Activated CD4-positive, alpha-beta T cell treated with anti-CD3 and anti-CD28 coated beads, Interleukin-2, amount 10 ng/mL, durations not matched to agents 24 days and 14 days (primary cell): ENCODE measurements at regions of chr1 and their contacts with region 1.

Region 1: DNA sequence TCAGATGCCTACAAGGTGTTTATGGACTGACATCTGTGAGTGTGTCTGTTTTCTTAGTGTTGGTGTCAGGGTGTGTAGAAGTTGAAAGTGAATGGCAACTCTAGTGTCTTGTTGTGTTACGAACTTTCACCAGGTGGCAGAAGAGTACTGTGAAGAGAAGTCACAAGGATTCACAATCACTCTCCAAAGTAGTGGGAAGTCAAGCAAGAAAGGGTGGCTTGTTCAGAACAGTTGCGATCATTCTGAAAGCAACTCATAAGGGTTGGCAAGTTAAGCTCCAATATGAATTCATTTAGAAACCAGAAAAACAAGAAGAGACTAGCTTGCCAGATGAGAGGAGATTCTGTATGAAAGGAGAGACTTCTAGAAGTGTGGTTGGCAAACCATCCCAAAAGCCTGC is 86.1 kb downstream of the FASLG start:
- DNase-seq: peak; percentile 86
- H3K4me3 Mint-ChIP-seq: peak overlapping the region; percentile 1
- H3K27ac Mint-ChIP-seq: no peak overlapping the region
- H3K4me1 Mint-ChIP-seq: peaks cover 33% of the 10 kb centered on the region
- H3K27me3 Mint-ChIP-seq: peaks cover 47% of the 10 kb centered on the region

Region 2: DNA sequence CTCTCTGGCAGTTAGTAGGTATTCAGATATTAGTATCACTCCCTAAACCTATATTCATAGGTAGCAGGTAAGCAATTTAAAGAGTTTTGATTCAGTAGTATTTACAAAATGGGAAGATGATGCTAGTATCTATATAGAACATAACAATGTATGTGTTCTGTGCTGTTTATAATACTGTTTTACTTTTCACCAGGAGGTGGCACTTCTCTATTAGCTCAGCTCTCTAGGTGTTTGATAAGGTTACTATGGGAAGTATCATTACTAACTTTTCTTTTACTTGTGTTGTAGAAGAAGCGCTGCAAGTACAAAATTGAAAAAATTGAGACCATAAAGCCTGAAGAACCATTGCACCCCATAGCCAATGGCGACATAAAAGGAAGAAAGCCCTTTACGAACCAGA is 135.5 kb before region 1 on chr1:
- intact Hi-C with region 1: no loop called
- DNase-seq: no peak
- H3K4me3 Mint-ChIP-seq: no peak overlapping the region
- H3K27ac Mint-ChIP-seq: no peak overlapping the region
- H3K4me1 Mint-ChIP-seq: peaks cover 13% of the 10 kb centered on the region
- H3K27me3 Mint-ChIP-seq: no peaks in the 10 kb centered on the region

Region 3: GRCh38 chr1:172708452-172708851 is 36.6 kb before region 1 on chr1:
- intact Hi-C with region 1: no loop called
- DNase-seq: peak; percentile 87
- H3K4me3 Mint-ChIP-seq: peak overlapping the region; percentile 56
- H3K27ac Mint-ChIP-seq: peak overlapping the region; percentile 88
- H3K4me1 Mint-ChIP-seq: peaks cover 49% of the 10 kb centered on the region
- H3K27me3 Mint-ChIP-seq: peaks cover 2% of the 10 kb centered on the region

Region 4: DNA sequence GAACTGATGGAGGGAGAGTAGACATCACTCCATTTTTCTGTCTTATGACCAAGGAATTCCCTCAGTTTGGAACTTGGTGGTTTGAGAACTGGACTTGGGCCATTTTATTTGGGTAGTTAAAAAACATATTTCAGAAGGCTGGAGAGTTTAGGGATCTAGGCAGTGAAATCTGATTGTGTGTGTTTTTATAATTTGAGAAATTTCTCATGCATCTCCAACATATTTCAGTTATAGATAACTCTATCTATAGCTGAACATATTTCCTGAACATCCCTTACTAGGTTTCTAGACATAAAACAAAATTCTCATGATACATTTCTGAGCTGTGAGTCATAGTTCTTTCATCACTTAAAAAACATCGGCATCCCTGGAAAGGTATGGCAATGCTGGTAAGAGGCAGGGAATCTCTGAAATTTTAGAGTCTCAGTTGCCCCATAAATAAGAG is 16.6 kb after region 1 on chr1:
- intact Hi-C with region 1: loop called (anchors 1 kb)
- DNase-seq: no peak
- H3K4me3 Mint-ChIP-seq: no peak overlapping the region
- H3K27ac Mint-ChIP-seq: no peak overlapping the region
- H3K4me1 Mint-ChIP-seq: peaks cover 15% of the 10 kb centered on the region
- H3K27me3 Mint-ChIP-seq: peaks cover 31% of the 10 kb centered on the region

Region 5: GRCh38 chr1:172837816-172838680 is 93.0 kb after region 1 on chr1:
- intact Hi-C with region 1: loop called (anchors 2 kb)
- DNase-seq: peak; percentile 79
- H3K4me3 Mint-ChIP-seq: no peak overlapping the region
- H3K27ac Mint-ChIP-seq: peak overlapping the region; percentile 38
- H3K4me1 Mint-ChIP-seq: peaks cover 28% of the 10 kb centered on the region
- H3K27me3 Mint-ChIP-seq: peaks cover 54% of the 10 kb centered on the region

Region 6: GRCh38 chr1:172966844-172967540 is 222.0 kb after region 1 on chr1:
- intact Hi-C with region 1: loop called (anchors 2 kb)
- DNase-seq: no peak
- H3K4me3 Mint-ChIP-seq: no peak overlapping the region
- H3K27ac Mint-ChIP-seq: no peak overlapping the region
- H3K4me1 Mint-ChIP-seq: peaks cover 8% of the 10 kb centered on the region
- H3K27me3 Mint-ChIP-seq: peaks cover 28% of the 10 kb centered on the region

Region 7: GRCh38 chr1:173297798-173298391 is 552.9 kb after region 1 on chr1:
- intact Hi-C with region 1: loop called (anchors 1 kb)
- DNase-seq: peak; percentile 68
- H3K4me3 Mint-ChIP-seq: no peak overlapping the region
- H3K27ac Mint-ChIP-seq: peak overlapping the region; percentile 51
- H3K4me1 Mint-ChIP-seq: peaks cover 20% of the 10 kb centered on the region
- H3K27me3 Mint-ChIP-seq: peaks cover 22% of the 10 kb centered on the region

Region 8: DNA sequence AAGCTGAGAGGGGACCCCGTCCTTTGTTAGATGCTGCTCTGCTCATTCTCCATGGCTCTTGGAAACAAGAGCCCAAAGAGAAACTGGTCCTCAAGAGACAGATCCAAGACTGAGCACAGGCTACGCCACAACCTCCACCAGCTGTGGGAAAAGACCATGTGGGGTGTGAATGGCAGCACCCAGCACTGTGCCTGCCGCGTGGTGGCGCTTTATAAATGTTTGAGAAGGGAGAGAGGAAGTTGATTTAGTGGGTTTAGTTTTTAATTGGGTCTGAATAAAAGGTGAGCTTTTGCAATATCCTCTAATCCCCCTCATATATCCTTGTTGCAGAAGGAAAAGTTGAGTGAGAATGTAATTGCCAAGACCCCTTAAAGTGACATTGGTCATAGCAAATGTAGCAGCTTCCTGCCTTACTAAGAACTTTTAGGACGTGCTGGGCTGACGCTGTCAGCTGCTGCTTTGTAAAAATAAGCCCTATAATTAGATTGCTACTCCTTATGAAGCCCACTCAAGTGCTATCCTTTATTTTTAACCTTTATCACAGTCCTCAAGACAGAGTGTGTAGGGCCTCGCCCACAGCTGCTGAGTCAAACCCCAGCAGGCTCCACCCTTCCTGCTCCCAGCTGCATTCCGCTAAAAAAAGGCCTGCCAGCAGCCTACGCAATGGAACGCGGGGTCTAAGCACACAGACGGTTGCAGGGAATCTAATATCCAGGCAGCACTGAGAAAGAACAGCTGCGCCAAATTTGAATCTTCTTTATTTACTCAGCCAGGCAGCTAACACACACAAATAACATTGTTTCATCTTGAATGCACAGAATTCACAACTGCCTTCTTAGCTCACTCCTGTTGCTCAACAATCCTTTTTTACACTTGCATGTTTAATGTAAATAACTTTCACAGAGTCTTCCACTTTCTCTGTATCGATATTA is 684.7 kb after region 1 on chr1:
- intact Hi-C with region 1: loop called (anchors 2 kb)
- DNase-seq: peak; percentile 88
- H3K4me3 Mint-ChIP-seq: peak overlapping the region; percentile 74
- H3K27ac Mint-ChIP-seq: peak overlapping the region; percentile 66
- H3K4me1 Mint-ChIP-seq: peaks cover 18% of the 10 kb centered on the region
- H3K27me3 Mint-ChIP-seq: no peaks in the 10 kb centered on the region

Region 9: DNA sequence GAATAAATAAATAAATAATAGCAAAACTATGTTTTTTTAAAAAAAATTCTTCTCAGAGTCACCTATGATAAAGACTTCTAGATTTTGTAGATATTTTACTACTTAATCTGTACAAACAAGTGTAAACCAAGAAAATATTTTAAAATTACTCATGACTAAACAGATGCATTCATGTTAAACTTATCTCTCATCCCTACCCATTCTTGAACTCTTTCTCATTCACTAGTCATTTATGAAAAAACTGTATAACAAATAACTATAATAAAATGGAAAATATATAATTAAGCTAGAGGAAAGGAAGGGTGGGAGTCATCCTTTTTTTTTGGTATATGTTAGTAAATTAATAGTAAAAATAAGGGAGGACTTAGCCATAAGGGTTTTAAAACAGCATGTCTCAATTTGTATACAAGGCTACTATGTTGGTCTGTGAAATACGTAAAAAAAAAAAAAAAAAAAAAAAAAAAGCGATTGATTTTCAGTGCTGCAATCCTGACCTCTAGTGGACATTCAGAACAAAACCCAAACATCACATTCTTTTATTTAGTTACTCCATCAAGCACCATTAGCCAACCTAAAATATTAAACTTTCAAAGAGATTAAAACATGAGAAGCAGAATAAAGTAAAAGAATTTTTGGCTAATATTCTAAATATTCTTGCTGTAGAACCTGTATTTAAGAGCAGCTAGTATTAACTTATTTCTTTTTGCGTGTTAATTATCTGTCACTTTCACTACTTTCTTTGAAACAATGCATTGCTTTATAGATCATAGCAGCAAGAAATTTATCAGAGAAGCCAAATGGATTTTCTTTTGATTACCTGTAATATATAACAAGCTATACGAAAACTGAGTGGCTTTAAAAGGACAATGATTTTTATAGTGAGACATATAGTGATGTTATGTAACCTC is 1998.9 kb after region 1 on chr1:
- intact Hi-C with region 1: loop called (anchors 5 kb)
- DNase-seq: no peak
- H3K4me3 Mint-ChIP-seq: no peak overlapping the region
- H3K27ac Mint-ChIP-seq: no peak overlapping the region
- H3K4me1 Mint-ChIP-seq: no peaks in the 10 kb centered on the region
- H3K27me3 Mint-ChIP-seq: peaks cover 3% of the 10 kb centered on the region